ENCODE measurements at regions of chr7 and their contacts with region 1.

Region 1: DNA sequence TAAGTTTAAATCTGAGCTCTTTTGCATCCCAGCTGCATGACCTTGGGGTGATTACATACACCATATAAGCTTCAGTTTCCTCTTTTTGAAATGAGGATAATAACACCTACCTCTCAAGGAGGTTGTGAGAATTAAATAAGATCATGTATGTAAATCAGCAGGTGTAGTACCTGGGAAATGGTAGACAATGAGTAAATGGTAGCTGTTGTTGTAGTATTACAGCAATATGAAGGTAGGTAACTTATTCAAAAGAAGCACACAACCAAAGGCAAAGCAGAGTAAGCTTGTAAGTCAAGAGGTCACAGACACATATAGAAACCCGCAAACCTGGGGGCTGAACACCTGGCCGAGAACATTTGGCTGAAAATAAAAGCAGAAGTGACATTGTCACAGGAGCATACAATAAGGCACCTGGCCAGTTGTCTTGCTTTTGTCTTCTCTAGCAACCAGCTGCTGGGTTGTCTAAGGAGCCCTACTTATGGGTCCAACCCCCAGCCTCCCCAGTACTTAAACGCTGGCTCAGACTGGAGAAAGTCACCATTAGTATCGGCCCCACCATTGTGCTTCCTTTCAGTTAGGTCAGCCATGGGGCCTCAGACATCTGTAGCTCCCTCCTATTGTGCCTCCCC is 203.6 kb upstream of the MKLN1 start:
- DNase-seq: peak; percentile 82
- CTCF ChIP-seq: no peak

Region 2: DNA sequence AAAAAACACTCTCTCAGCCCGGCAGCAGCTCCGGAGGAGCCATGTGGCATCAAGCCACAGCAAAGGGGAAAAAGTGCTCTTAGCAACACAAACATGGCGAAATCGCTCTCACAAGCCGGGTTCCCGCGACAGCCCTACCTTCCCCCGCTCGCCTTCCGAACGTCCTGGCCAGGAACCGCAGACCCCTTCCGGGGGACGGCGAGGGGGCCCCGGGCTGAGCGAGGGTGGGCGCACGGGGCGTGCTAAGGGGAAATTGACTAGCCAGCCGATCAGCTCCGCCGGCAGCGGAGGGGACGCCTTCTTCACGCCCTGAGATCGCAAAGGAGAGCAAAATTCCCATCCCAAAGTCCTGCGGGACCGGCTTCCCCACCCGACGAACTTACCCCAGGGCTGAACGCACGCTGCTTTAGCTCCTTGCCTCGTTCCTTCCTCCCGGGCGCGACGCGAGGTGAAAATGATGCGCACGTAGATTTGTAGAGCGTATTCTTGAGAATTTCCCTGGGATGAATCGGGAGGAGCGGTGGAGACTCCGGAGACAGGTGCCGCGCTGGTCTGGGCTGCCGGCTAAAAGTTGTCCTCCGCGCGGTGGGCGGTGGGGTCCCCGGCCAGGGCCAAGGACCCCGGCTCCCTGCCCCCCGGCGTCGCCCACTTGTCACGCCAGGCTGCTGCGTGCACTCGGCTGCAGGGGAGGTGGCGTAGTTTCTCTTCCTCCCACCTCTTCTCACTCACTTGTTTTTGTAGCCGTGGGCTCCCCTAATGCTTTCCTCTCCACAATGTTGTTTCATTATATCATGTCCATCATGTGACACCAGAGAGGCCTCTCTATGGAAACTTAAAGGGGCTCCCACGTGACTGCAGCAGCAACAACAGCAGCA is 16.5 kb before region 1 on chr7:
- CTCF ChIA-PET with region 1: interaction called, 63 read pairs
- POLR2A ChIA-PET with region 1: interaction called, 41 read pairs
- DNase-seq: peak; percentile 89
- CTCF ChIP-seq: peak; percentile 21

Measured in GM10248 (cell line).